ENCODE measurements at regions of chr6 and their contacts with region 1.

Region 1: GRCh38 chr6:105374010-105374420 is 28.9 kb downstream of the PREP start:
- DNase-seq: peak; percentile 72 to 100
- H3K4me3 ChIP-seq: peak overlapping the region; percentile 6; the same call in 1 of the 2 replicates
- H3K27ac ChIP-seq: peak overlapping the region; percentile 86
- H3K4me1 ChIP-seq: peaks cover 38% of the 10 kb centered on the region
- H3K27me3 ChIP-seq: no peaks in the 10 kb centered on the region
- CTCF ChIP-seq: 0 out of 2 replicates have a peak, but pooled peaks have one; percentile 21

Region 2: DNA sequence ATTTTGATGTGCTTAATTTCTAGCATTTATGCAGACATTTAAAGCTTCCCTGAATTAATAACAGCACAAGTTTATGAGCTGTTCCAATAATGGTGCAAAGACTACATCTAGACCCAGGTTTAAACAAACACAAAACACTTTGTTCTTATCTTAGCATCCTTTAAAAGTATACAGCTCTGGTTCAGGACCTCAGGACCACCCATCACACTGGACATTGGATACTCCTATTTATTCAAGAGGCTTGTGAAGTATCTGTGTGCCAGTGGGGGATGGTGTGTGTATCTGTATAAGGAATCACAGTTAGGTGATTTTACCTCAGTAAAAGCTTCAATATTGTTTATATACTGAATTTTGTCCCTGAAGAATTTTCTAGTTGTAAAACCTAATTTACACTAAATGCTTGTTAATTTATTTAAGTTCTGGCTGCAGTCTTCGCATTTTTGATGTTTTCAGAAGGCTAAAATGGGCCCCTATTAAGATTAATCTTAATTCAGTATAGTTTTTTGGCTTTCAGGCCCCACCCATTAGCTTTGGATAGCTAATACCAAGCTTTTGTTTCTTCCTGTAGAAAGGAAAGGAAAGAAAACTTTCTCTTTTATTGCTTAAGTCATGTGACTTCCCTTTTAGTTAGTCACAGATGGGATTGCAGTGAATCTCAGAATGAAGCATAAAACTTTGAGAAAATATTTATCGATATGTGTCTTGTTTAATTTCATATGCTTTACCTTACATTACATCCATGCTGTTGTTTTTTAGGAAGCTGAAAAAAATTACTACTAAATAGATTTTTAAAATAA is 404.0 kb before region 1 on chr6:
- CTCF ChIA-PET with region 1: no interaction called
- POLR2A ChIA-PET with region 1: interaction called, 29 read pairs
- intact Hi-C with region 1: no loop called
- DNase-seq: no peak
- H3K4me3 ChIP-seq: no peak overlapping the region
- H3K27ac ChIP-seq: no peak overlapping the region
- H3K4me1 ChIP-seq: no peaks in the 10 kb centered on the region
- H3K27me3 ChIP-seq: no peaks in the 10 kb centered on the region
- CTCF ChIP-seq: no peak

Region 3: GRCh38 chr6:105388152-105388791 is 14.3 kb after region 1 on chr6:
- CTCF ChIA-PET with region 1: no interaction called
- POLR2A ChIA-PET with region 1: no interaction called
- intact Hi-C with region 1: loop called (anchors 1 kb)
- DNase-seq: peak; percentile 6 to 99
- H3K4me3 ChIP-seq: peak overlapping the region; percentile 5; the same call in 1 of the 2 replicates
- H3K27ac ChIP-seq: peak overlapping the region; percentile 99
- H3K4me1 ChIP-seq: peaks cover 52% of the 10 kb centered on the region
- H3K27me3 ChIP-seq: no peaks in the 10 kb centered on the region
- CTCF ChIP-seq: no peak

Measured in PC-9 (cell line).